RWPE1 (cell line): ENCODE measurements at regions of chr10 and their contacts with region 1.

Region 1: DNA sequence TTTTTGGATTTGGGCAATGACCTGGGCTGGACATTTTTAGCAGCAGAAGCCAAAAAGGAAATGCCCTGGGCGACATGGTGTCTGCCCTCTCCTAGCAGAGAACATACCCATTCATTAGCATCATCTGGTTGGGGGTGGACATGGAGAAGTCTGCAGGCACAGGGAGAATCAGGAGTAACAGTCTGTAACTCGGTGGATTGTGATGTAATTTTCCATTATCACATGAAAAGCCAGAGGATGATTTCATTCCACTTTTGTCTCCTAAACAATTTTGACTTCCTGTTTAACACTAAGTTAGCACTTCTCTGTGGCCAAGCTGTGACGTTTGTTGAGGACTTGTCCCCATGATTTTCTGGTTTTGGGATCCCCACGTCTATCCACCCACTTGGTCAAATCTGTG is 153.8 kb upstream of the HABP2 start:
- DNase-seq: no peak
- H3K27ac ChIP-seq: no peak overlapping the region
- CTCF ChIP-seq: no peak

Region 2: GRCh38 chr10:113245286-113245685 is 153.8 kb before region 1 on chr10:
- CTCF ChIA-PET with region 1: no interaction called
- POLR2A ChIA-PET with region 1: interaction called, 11 read pairs
- DNase-seq: no peak
- H3K27ac ChIP-seq: no peak overlapping the region
- CTCF ChIP-seq: no peak